ENCODE measurements at regions of chr3 and their contacts with region 1.

Region 1: DNA sequence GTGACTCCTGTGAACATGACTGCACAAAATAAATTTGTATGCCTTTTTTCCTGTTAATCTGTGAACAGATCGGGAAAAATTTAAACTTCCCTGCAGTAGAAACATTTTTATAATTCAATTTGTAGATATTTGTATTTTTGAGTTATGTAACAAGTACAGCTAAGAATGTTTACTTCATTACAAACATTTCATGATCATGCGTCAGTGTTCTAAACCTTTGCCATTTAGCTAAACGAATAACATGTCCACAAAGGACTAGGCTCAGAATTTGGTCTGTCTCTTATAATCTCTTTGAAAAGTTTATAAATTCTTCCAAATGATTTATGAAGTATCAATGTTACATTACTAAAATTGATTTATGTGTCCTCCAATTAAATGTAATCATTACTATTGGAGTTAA is 17.3 kb upstream of the CRYBG3 start:
- DNase-seq: no peak
- H3K4me3 ChIP-seq: no peak overlapping the region
- H3K4me3 Mint-ChIP-seq: no peak overlapping the region
- H3K27ac ChIP-seq: no peak overlapping the region
- H3K27ac Mint-ChIP-seq: no peak overlapping the region
- H3K4me1 ChIP-seq: no peaks in the 10 kb centered on the region
- H3K4me1 Mint-ChIP-seq: no peaks in the 10 kb centered on the region
- H3K27me3 ChIP-seq: no peaks in the 10 kb centered on the region
- H3K27me3 Mint-ChIP-seq: peaks cover 0 to 3% of the 10 kb centered on the region in 2 donors

Region 2: GRCh38 chr3:97815149-97815917 is 10.9 kb after region 1 on chr3:
- CTCF ChIA-PET with region 1: no interaction called
- POLR2A ChIA-PET with region 1: no interaction called
- intact Hi-C with region 1: loop called (anchors 2 kb)
- DNase-seq: peak; percentile 14 to 72 (median 19)
- H3K4me3 ChIP-seq: no peak overlapping the region
- H3K4me3 Mint-ChIP-seq: no peak overlapping the region
- H3K27ac ChIP-seq: no peak overlapping the region
- H3K27ac Mint-ChIP-seq: peak overlapping the region in 3 of 7 donors; percentile 12 to 69 (median 25)
- H3K4me1 ChIP-seq: peaks cover 8% of the 10 kb centered on the region
- H3K4me1 Mint-ChIP-seq: peaks cover 0 to 11% (median 7%) of the 10 kb centered on the region in 4 donors
- H3K27me3 ChIP-seq: no peaks in the 10 kb centered on the region
- H3K27me3 Mint-ChIP-seq: peaks cover 0 to 4% of the 10 kb centered on the region in 2 donors

Measured in CD4-positive, alpha-beta memory T cell (primary cell).